ENCODE measurements at regions of chr1 and their contacts with region 1.

Region 1: GRCh38 chr1:10794714-10795275 is 1.7 kb downstream of the CASZ1 start:
- DNase-seq: peak; percentile 40
- H3K4me3 ChIP-seq: peak overlapping the region; percentile 68
- H3K27ac ChIP-seq: peak overlapping the region; percentile 86
- H3K4me1 ChIP-seq: no peaks in the 10 kb centered on the region
- H3K27me3 ChIP-seq: peaks cover 3% of the 10 kb centered on the region
- CTCF ChIP-seq: no peak

Region 2: GRCh38 chr1:10686404-10687040 is 108.3 kb before region 1 on chr1:
- intact Hi-C with region 1: loop called (anchors 5 kb)
- DNase-seq: no peak
- H3K4me3 ChIP-seq: no peak overlapping the region
- H3K27ac ChIP-seq: peak overlapping the region; percentile 80
- H3K4me1 ChIP-seq: peaks cover 36% of the 10 kb centered on the region
- H3K27me3 ChIP-seq: no peaks in the 10 kb centered on the region
- CTCF ChIP-seq: no peak

Measured in colonic mucosa (tissue), 4 donors.